ENCODE measurements at regions of chrX and their contacts with region 1.

Region 1: GRCh38 chrX:97026406-97026805 is 142.7 kb downstream of the RPA4 start:
- DNase-seq: peak; percentile 49
- H3K4me3 ChIP-seq: no peak overlapping the region
- H3K27ac ChIP-seq: no peak overlapping the region
- H3K4me1 ChIP-seq: peaks cover 14% of the 10 kb centered on the region
- H3K27me3 ChIP-seq: no peaks in the 10 kb centered on the region
- CTCF ChIP-seq: no peak
- POLR2A ChIP-seq: no peak

Region 2: DNA sequence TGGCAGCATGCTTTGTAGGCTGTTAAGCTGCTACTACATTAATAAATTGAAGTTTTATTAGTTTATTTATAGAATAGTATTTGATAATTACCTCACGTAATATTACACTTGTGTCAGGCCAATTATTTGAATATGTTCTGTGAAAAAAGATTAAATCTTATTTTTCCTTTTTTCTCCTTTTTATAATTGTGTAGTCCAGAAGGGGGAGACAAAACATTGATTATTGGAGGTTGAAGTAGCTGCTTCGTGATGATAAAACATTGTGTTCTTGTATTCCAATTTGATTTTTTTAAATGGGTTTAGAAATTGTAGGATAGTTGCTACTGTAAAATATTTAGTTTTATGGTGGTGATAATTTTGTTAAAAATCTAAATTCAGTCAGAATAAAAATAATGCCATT is 256.1 kb before region 1 on chrX:
- CTCF ChIA-PET with region 1: interaction called, 5 read pairs
- POLR2A ChIA-PET with region 1: no interaction called
- dilution Hi-C with region 1: no loop called
- intact Hi-C with region 1: loop called (anchors 5 kb)
- DNase-seq: peak; percentile 9
- H3K4me3 ChIP-seq: no peak overlapping the region
- H3K27ac ChIP-seq: no peak overlapping the region
- H3K4me1 ChIP-seq: no peaks in the 10 kb centered on the region
- H3K27me3 ChIP-seq: no peaks in the 10 kb centered on the region
- CTCF ChIP-seq: peak in 1 of 2 donors; percentile 5
- POLR2A ChIP-seq: no peak

Region 3: DNA sequence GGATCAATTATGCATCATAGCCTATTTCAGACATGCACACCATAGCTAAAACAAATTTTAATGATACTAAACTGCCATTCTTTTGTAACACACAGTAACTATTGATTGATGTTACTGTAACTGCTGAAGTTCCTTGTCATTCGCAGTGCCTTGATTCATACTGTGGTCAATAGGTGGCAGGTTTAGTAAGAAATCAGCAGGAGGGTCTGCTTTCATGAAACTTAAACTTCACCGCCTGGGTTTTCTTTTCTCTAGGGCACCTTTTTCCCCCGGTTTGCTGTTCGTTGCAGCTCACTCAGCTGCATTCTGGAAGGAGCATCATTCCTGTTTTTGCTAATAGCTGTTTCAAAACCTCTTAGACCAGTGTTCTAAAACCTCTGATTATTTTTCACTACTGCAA is 54.6 kb before region 1 on chrX:
- CTCF ChIA-PET with region 1: no interaction called
- POLR2A ChIA-PET with region 1: no interaction called
- dilution Hi-C with region 1: no loop called
- intact Hi-C with region 1: no loop called
- DNase-seq: no peak
- H3K4me3 ChIP-seq: no peak overlapping the region
- H3K27ac ChIP-seq: no peak overlapping the region
- H3K4me1 ChIP-seq: no peaks in the 10 kb centered on the region
- H3K27me3 ChIP-seq: no peaks in the 10 kb centered on the region
- CTCF ChIP-seq: no peak
- POLR2A ChIP-seq: no peak

Region 4: GRCh38 chrX:97685753-97686152 is 659.3 kb after region 1 on chrX:
- CTCF ChIA-PET with region 1: interaction called, 4 read pairs
- POLR2A ChIA-PET with region 1: no interaction called
- dilution Hi-C with region 1: no loop called
- intact Hi-C with region 1: loop called (anchors 1 kb)
- DNase-seq: peak; percentile 47
- H3K4me3 ChIP-seq: no peak overlapping the region
- H3K27ac ChIP-seq: no peak overlapping the region
- H3K4me1 ChIP-seq: no peaks in the 10 kb centered on the region
- H3K27me3 ChIP-seq: no peaks in the 10 kb centered on the region
- CTCF ChIP-seq: peak; percentile 32 to 48
- POLR2A ChIP-seq: no peak

Region 5: DNA sequence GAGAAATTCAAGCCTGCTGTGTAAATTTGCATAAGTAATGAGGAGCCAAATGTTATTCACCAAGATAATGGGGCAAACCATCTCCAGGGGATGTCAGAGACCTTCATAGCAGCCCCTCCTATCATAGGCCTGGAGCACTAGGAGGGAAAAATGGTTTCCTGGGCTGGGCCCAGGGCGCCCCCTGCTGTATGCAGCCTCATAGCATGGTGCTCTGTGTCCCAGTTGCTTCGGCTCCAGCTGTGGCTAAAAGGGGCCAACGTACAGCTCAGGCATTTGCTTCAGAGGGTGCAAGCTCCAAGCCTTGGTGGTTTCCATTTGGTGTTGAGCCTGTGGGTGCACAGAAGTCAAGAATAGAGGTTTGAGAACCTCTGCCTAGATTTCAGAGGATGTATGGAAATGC is 716.6 kb after region 1 on chrX:
- CTCF ChIA-PET with region 1: no interaction called
- POLR2A ChIA-PET with region 1: no interaction called
- dilution Hi-C with region 1: no loop called
- intact Hi-C with region 1: loop called (anchors 5 kb)
- DNase-seq: no peak
- H3K4me3 ChIP-seq: no peak overlapping the region
- H3K27ac ChIP-seq: no peak overlapping the region
- H3K4me1 ChIP-seq: no peaks in the 10 kb centered on the region
- H3K27me3 ChIP-seq: no peaks in the 10 kb centered on the region
- CTCF ChIP-seq: peak in 1 of 2 donors; percentile 13
- POLR2A ChIP-seq: no peak

Measured in endothelial cell of umbilical vein (primary cell).